Naive thymus-derived CD4-positive, alpha-beta T cell (primary cell): ENCODE measurements at regions of chr2 and their contacts with region 1.

Region 1: GRCh38 chr2:37648331-37649011 is 23.0 kb downstream of the CDC42EP3 start:
- DNase-seq: no peak
- ATAC-seq: peak; percentile 88
- H3K4me3 ChIP-seq: peak overlapping the region; percentile 9
- H3K4me3 Mint-ChIP-seq: peak overlapping the region; percentile 17 to 79 (median 65)
- H3K27ac ChIP-seq: no peak overlapping the region
- H3K27ac Mint-ChIP-seq: peak overlapping the region; percentile 77 to 95 (median 90)
- H3K4me1 ChIP-seq: peaks cover 40 to 91% of the 10 kb centered on the region in 2 donors
- H3K4me1 Mint-ChIP-seq: peaks cover 62 to 95% (median 79%) of the 10 kb centered on the region in 7 donors
- H3K27me3 ChIP-seq: no peaks in the 10 kb centered on the region
- H3K27me3 Mint-ChIP-seq: no peaks in the 10 kb centered on the region

Region 2: DNA sequence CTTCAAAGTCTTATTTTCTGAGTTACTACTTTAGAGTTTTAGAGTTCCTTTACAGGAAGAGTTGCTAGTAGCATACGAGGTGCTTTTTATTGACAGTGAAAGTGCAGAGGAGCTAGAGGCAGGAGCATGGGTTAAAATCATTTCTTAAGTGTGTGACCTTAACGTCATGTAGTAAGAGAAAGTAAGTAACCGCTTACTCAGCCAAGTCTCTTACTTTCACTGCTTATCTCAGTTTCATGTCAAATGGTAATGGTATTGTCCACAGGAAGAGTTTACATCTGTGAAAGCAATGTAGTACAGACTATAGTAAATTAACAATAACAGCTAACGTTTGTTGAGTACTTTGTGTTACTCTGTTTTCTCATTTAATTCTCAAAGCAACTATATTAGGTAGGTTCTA is 404.5 kb before region 1 on chr2:
- CTCF ChIA-PET with region 1: no interaction called
- POLR2A ChIA-PET with region 1: no interaction called
- intact Hi-C with region 1: no loop called
- DNase-seq: peak in 2 of 9 donors; percentile 15 to 19
- ATAC-seq: peak; percentile 63
- H3K4me3 ChIP-seq: no peak overlapping the region
- H3K4me3 Mint-ChIP-seq: peak overlapping the region in 3 of 10 donors; percentile 7 to 58 (median 54)
- H3K27ac ChIP-seq: peak overlapping the region; percentile 8
- H3K27ac Mint-ChIP-seq: peak overlapping the region; percentile 30 to 92 (median 86)
- H3K4me1 ChIP-seq: no peaks in the 10 kb centered on the region
- H3K4me1 Mint-ChIP-seq: peaks cover 5 to 41% (median 19%) of the 10 kb centered on the region in 7 donors
- H3K27me3 ChIP-seq: no peaks in the 10 kb centered on the region
- H3K27me3 Mint-ChIP-seq: no peaks in the 10 kb centered on the region

Region 3: GRCh38 chr2:37635504-37636380 is 12.7 kb before region 1 on chr2:
- CTCF ChIA-PET with region 1: no interaction called
- POLR2A ChIA-PET with region 1: interaction called, 5 read pairs
- intact Hi-C with region 1: loop called in 1 of 2 experiments (anchors 1 kb)
- DNase-seq: peak; percentile 20 to 77 (median 39)
- ATAC-seq: peak; percentile 87
- H3K4me3 ChIP-seq: no peak overlapping the region
- H3K4me3 Mint-ChIP-seq: peak overlapping the region in 8 of 10 donors; percentile 13 to 49 (median 40)
- H3K27ac ChIP-seq: peak overlapping the region; percentile 41
- H3K27ac Mint-ChIP-seq: peak overlapping the region; percentile 5 to 84 (median 80)
- H3K4me1 ChIP-seq: peaks cover 24 to 58% of the 10 kb centered on the region in 2 donors
- H3K4me1 Mint-ChIP-seq: peaks cover 31 to 70% (median 36%) of the 10 kb centered on the region in 7 donors
- H3K27me3 ChIP-seq: no peaks in the 10 kb centered on the region
- H3K27me3 Mint-ChIP-seq: peaks cover 0 to 13% (median 0%) of the 10 kb centered on the region in 5 donors